ENCODE measurements at regions of chr3 and their contacts with region 1.

Region 1: GRCh38 chr3:66253790-66254620 is 33.2 kb downstream of the SLC25A26 start:
- DNase-seq: no peak
- H3K4me3 Mint-ChIP-seq: no peak overlapping the region
- H3K27ac Mint-ChIP-seq: no peak overlapping the region
- H3K4me1 Mint-ChIP-seq: peaks cover 6% of the 10 kb centered on the region
- H3K27me3 Mint-ChIP-seq: no peaks in the 10 kb centered on the region

Region 2: DNA sequence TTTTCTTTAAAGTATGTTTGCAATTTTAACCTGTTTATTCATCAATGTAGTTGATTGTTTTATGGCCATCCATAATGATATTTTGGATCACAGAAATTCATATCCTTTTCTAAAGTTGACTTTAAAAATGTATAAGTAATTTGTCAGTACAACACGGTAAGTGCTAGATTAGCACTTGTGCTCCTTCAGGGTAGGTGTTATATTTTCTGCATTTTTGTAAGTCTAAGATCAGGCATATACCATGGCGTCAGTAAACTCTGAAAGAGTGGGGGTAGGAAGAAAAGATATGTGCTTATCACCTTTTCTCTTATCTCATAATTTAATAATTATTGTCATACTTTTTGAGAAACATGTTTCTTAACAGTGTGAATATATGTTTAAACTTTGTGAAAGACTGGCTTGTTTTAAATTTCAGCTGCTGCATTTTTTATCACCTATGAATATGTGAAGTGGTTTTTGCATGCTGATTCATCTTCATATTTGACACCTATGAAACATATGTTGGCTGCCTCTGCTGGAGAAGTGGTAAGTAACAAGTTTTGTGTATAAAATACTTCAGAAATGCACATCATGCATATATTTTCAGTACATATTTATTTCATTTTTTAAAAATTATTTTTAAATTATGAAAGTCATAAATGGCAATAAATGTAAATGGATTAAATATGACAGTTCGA is 11.1 kb before region 1 on chr3:
- CTCF ChIA-PET with region 1: interaction called, 21 read pairs
- POLR2A ChIA-PET with region 1: no interaction called
- intact Hi-C with region 1: no loop called
- DNase-seq: no peak
- H3K4me3 Mint-ChIP-seq: no peak overlapping the region
- H3K27ac Mint-ChIP-seq: no peak overlapping the region
- H3K4me1 Mint-ChIP-seq: peaks cover 17% of the 10 kb centered on the region
- H3K27me3 Mint-ChIP-seq: no peaks in the 10 kb centered on the region

Region 3: DNA sequence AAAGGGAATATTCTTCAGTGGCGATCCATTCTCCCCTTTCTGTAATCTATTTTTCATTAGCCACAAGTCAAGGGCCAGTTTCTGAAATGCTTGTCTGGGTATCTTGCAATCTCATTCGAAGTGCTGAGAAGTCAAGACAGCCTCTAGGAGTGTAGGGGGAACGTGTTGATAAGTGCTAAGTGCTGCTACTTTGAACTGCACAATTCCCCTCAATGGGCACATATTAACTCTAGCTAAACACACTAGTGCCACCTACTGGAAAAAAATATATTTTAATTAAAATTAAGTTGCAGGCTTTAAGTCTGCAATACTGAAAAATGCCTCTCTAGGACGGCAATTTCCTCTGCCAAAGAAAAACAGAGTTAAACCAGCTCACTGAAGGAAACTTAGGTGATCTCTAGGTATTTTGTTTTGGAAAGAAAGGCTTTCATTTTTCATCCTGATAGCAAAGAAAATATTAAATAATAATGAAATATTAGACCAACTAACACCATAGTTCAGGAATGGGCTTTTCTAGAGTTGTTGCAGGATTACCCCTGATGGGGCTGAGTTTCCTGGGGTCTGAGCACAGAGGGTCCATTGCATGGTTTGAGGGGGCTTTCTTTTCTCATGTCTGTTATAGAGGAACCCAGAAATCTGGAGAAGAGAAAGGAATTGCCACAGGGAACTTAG is 562.2 kb after region 1 on chr3:
- CTCF ChIA-PET with region 1: interaction called, 180 read pairs
- POLR2A ChIA-PET with region 1: no interaction called
- intact Hi-C with region 1: loop called (anchors 1 kb)
- DNase-seq: no peak
- H3K4me3 Mint-ChIP-seq: no peak overlapping the region
- H3K27ac Mint-ChIP-seq: no peak overlapping the region
- H3K4me1 Mint-ChIP-seq: peaks cover 2% of the 10 kb centered on the region
- H3K27me3 Mint-ChIP-seq: peaks cover 1% of the 10 kb centered on the region

Region 4: DNA sequence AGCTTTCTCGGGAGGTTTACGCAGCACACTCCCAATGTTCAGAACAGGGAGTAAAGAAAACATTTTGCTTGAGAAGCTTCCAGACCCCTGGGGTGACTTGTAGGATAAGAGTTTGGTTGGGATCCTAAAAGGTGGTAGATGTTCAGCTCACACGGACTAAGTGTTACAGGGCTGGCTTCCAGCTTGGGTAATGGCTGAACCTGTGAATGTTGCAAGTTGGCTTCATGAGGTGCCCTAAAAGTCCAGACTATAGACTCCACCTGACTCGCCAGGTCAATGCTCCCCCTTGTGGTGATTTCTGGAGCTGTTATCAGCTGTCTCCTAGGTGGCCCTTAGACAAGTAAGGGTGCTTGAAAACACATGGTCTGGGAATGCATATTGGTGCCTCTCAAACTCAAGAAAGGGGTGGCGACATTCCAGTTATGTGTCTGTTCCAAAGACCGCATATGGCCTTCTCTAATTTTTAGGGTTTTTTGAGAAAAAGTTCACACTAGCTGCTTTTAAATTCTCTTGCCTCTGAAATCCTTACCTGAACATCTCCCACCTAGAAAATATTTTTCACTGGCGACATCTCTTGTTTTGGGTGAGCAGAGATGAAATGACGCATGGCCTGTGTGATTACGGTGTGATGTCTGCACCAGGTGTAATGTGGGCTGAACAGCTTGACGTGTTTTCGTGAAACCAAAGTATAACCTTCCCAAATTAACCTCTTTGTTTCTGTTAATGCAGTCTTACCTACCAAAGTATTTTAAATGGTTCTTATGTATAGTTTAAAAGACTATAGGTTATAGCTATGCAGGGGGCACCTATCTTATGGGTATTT is 568.4 kb after region 1 on chr3:
- CTCF ChIA-PET with region 1: interaction called, 180 read pairs
- POLR2A ChIA-PET with region 1: no interaction called
- intact Hi-C with region 1: no loop called
- DNase-seq: peak; percentile 76
- H3K4me3 Mint-ChIP-seq: no peak overlapping the region
- H3K27ac Mint-ChIP-seq: no peak overlapping the region
- H3K4me1 Mint-ChIP-seq: no peaks in the 10 kb centered on the region
- H3K27me3 Mint-ChIP-seq: no peaks in the 10 kb centered on the region

Measured in activated CD4-positive, alpha-beta memory T cell treated with anti-CD3 and anti-CD28 coated beads for 36 hours (primary cell).